Heart right ventricle (tissue), 16 donors: ENCODE measurements at regions of chr14 and their contacts with region 1.

Region 1: GRCh38 chr14:61308198-61308597 is 13.2 kb upstream of the PRKCH start:
- DNase-seq: no peak
- ATAC-seq: peak; percentile 23 to 93 (median 80)
- H3K4me3 ChIP-seq: no peak overlapping the region
- H3K27ac ChIP-seq: peak overlapping the region in 6 of 10 donors; percentile 49 to 73 (median 59)
- H3K4me1 ChIP-seq: peaks cover 0 to 25% (median 6%) of the 10 kb centered on the region in 9 donors
- H3K27me3 ChIP-seq: peaks cover 0 to 6% (median 0%) of the 10 kb centered on the region in 7 donors
- CTCF ChIP-seq: no peak

Region 2: DNA sequence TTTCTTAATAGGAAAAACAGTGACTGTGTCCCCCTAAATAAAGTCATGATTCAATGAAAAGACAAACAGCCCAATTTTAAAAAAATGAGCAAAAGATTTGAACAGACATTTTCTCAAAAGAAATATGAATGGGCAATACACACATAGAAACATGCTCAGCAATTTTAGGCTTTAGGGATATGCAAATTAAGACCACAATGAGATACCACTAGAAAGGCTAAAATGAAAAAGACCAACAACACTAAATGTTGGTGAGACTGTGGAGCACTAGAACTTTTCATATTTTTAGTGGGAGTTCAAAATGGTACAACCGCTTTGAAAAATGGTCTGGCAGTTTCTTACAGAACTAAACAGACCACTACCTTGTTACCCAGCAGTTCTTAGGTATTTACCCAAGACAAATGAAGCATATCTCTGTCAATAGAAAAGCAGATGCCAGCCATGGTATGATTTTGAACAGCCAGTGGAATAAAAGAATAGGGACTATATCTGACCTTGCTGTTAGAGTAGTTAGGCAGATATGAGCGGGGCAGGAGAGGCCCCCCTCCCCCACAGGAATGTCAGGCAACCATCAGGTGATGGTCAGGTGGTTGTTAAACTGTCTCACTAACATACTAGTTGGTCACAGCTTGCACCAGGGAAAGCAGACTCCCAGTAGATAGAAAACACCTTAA is 122.0 kb after region 1 on chr14:
- intact Hi-C with region 1: loop called in 1 of 10 experiments (anchors 5 kb)
- DNase-seq: no peak
- ATAC-seq: no peak
- H3K4me3 ChIP-seq: no peak overlapping the region
- H3K27ac ChIP-seq: peak overlapping the region in 1 of 10 donors; percentile 59
- H3K4me1 ChIP-seq: peaks cover 0 to 79% (median 44%) of the 10 kb centered on the region in 9 donors
- H3K27me3 ChIP-seq: no peaks in the 10 kb centered on the region
- CTCF ChIP-seq: no peak

Region 3: DNA sequence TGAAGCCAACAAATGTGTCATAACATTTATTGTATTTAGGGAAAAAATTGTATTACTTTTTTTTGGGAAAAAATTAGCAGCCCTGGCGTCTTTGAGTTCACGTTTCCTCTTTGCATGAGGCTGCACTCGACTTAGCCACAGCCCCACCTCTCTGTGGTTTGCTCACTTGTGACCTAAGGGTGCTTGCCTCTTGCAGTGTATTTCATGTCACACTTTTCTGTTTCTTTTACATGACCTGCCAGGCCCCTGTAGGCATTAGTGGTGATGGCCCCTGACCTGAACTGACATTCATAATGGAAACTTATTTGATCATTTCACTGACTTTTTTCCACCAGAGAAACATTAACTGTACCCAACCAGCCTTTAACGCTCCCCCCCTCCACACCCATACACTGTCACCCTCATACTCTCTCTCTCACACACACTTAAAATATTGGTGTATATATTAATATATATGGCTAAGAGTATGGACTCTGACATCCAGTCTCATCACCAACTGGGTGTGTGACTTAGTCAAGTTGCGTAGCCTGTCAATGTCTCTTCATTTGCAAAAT is 136.1 kb after region 1 on chr14:
- intact Hi-C with region 1: no loop called
- DNase-seq: no peak
- ATAC-seq: peak in 2 of 8 donors; percentile 46 to 51
- H3K4me3 ChIP-seq: no peak overlapping the region
- H3K27ac ChIP-seq: peak overlapping the region in 1 of 10 donors; percentile 32
- H3K4me1 ChIP-seq: peaks cover 0 to 28% (median 10%) of the 10 kb centered on the region in 9 donors
- H3K27me3 ChIP-seq: no peaks in the 10 kb centered on the region
- CTCF ChIP-seq: no peak

Region 4: GRCh38 chr14:62081012-62081612 is 772.9 kb after region 1 on chr14:
- intact Hi-C with region 1: no loop called
- DNase-seq: no peak
- ATAC-seq: no peak
- H3K4me3 ChIP-seq: no peak overlapping the region
- H3K27ac ChIP-seq: no peak overlapping the region
- H3K4me1 ChIP-seq: no peaks in the 10 kb centered on the region
- H3K27me3 ChIP-seq: peaks cover 0 to 15% (median 0%) of the 10 kb centered on the region in 7 donors
- CTCF ChIP-seq: no peak